CD4-positive, alpha-beta T cell (primary cell): ENCODE measurements at regions of chr1 and their contacts with region 1.

Region 1: DNA sequence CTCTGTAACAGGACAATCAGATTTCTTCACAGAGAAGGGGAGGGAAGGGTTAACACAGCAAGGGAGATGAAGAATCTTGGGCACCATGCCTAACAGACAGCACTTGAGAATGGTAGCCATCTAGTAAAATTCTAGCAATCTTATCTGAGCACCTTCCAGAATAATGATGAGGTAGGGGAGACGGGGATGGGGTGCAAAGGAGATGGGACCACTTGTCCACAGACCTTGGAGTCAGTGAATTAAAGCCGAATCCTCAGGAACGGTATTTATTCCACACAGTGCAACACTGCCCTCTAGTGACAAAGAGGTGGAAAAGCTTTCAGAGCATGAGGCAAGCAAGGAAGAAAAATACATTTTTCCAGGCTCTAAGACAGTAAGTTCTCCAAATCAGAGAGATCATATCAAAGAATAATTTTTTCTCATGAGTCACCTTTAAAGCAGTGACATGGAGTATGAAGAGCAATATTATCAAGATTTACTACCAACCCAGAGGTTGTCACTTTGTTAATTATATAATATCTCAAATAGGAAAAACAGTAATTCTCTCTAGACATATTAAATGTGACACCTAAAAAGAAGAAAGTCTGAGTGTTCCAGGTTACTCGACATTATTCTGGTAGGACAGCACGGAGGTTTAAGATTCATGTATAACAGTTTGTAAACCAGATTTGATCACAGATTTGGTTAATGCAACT is 43.3 kb upstream of the LPAR3 start:
- DNase-seq: peak in 9 of 14 experiments; percentile 6 to 80 (median 22)
- ATAC-seq: peak; percentile 79
- H3K4me3 ChIP-seq: no peak overlapping the region
- H3K4me3 Mint-ChIP-seq: no peak overlapping the region
- H3K27ac ChIP-seq: no peak overlapping the region
- H3K27ac Mint-ChIP-seq: no peak overlapping the region
- H3K4me1 ChIP-seq: peaks cover 3% of the 10 kb centered on the region
- H3K4me1 Mint-ChIP-seq: no peaks in the 10 kb centered on the region
- H3K27me3 ChIP-seq: no peaks in the 10 kb centered on the region
- H3K27me3 Mint-ChIP-seq: no peaks in the 10 kb centered on the region
- CTCF ChIP-seq: peak; percentile 97

Region 2: GRCh38 chr1:83905315-83905907 is 1030.9 kb before region 1 on chr1:
- CTCF ChIA-PET with region 1: no interaction called
- POLR2A ChIA-PET with region 1: no interaction called
- intact Hi-C with region 1: loop called in 1 of 2 experiments (anchors 5 kb)
- DNase-seq: peak in 4 of 14 experiments; percentile 15 to 53 (median 46)
- ATAC-seq: peak; percentile 54
- H3K4me3 ChIP-seq: no peak overlapping the region
- H3K4me3 Mint-ChIP-seq: no peak overlapping the region
- H3K27ac ChIP-seq: no peak overlapping the region
- H3K27ac Mint-ChIP-seq: no peak overlapping the region
- H3K4me1 ChIP-seq: no peaks in the 10 kb centered on the region
- H3K4me1 Mint-ChIP-seq: no peaks in the 10 kb centered on the region
- H3K27me3 ChIP-seq: no peaks in the 10 kb centered on the region
- H3K27me3 Mint-ChIP-seq: peaks cover 18% of the 10 kb centered on the region
- CTCF ChIP-seq: peak; percentile 89

Region 3: GRCh38 chr1:84135341-84135740 is 800.9 kb before region 1 on chr1:
- CTCF ChIA-PET with region 1: no interaction called
- POLR2A ChIA-PET with region 1: no interaction called
- intact Hi-C with region 1: loop called (anchors 5 kb)
- DNase-seq: no peak
- ATAC-seq: no peak
- H3K4me3 ChIP-seq: no peak overlapping the region
- H3K4me3 Mint-ChIP-seq: no peak overlapping the region
- H3K27ac ChIP-seq: no peak overlapping the region
- H3K27ac Mint-ChIP-seq: no peak overlapping the region
- H3K4me1 ChIP-seq: no peaks in the 10 kb centered on the region
- H3K4me1 Mint-ChIP-seq: peaks cover 13% of the 10 kb centered on the region
- H3K27me3 ChIP-seq: no peaks in the 10 kb centered on the region
- H3K27me3 Mint-ChIP-seq: no peaks in the 10 kb centered on the region
- CTCF ChIP-seq: no peak

Region 4: GRCh38 chr1:84442256-84442655 is 494.0 kb before region 1 on chr1:
- CTCF ChIA-PET with region 1: interaction called, 6 read pairs
- POLR2A ChIA-PET with region 1: no interaction called
- intact Hi-C with region 1: loop called in 1 of 2 experiments (anchors 2 kb)
- DNase-seq: peak in 4 of 14 experiments; percentile 7 to 89 (median 86)
- ATAC-seq: peak; percentile 98
- H3K4me3 ChIP-seq: no peak overlapping the region
- H3K4me3 Mint-ChIP-seq: peak overlapping the region; percentile 5
- H3K27ac ChIP-seq: no peak overlapping the region
- H3K27ac Mint-ChIP-seq: peak overlapping the region; percentile 1
- H3K4me1 ChIP-seq: peaks cover 17% of the 10 kb centered on the region
- H3K4me1 Mint-ChIP-seq: peaks cover 11% of the 10 kb centered on the region
- H3K27me3 ChIP-seq: no peaks in the 10 kb centered on the region
- H3K27me3 Mint-ChIP-seq: peaks cover 15% of the 10 kb centered on the region
- CTCF ChIP-seq: peak; percentile 69

Region 5: GRCh38 chr1:84753516-84754385 is 182.5 kb before region 1 on chr1:
- CTCF ChIA-PET with region 1: interaction called, 4 read pairs
- POLR2A ChIA-PET with region 1: no interaction called
- intact Hi-C with region 1: loop called in 1 of 2 experiments (anchors 2 kb)
- DNase-seq: peak; percentile 62 to 88 (median 73)
- ATAC-seq: peak; percentile 98
- H3K4me3 ChIP-seq: no peak overlapping the region
- H3K4me3 Mint-ChIP-seq: no peak overlapping the region
- H3K27ac ChIP-seq: no peak overlapping the region
- H3K27ac Mint-ChIP-seq: no peak overlapping the region
- H3K4me1 ChIP-seq: peaks cover 4% of the 10 kb centered on the region
- H3K4me1 Mint-ChIP-seq: peaks cover 3% of the 10 kb centered on the region
- H3K27me3 ChIP-seq: peaks cover 3 to 15% of the 10 kb centered on the region in 2 experiments
- H3K27me3 Mint-ChIP-seq: peaks cover 22% of the 10 kb centered on the region
- CTCF ChIP-seq: peak; percentile 97

Region 6: GRCh38 chr1:84781946-84782771 is 154.1 kb before region 1 on chr1:
- CTCF ChIA-PET with region 1: interaction called, 13 read pairs
- POLR2A ChIA-PET with region 1: no interaction called
- intact Hi-C with region 1: loop called in 1 of 2 experiments (anchors 1 kb)
- DNase-seq: peak; percentile 65 to 87 (median 76)
- ATAC-seq: peak; percentile 93
- H3K4me3 ChIP-seq: peak overlapping the region; percentile 36
- H3K4me3 Mint-ChIP-seq: peak overlapping the region; percentile 88
- H3K27ac ChIP-seq: no peak overlapping the region
- H3K27ac Mint-ChIP-seq: peak overlapping the region; percentile 50
- H3K4me1 ChIP-seq: peaks cover 20% of the 10 kb centered on the region
- H3K4me1 Mint-ChIP-seq: peaks cover 32% of the 10 kb centered on the region
- H3K27me3 ChIP-seq: no peaks in the 10 kb centered on the region
- H3K27me3 Mint-ChIP-seq: no peaks in the 10 kb centered on the region
- CTCF ChIP-seq: peak; percentile 84